ENCODE measurements at regions of chr3 and their contacts with region 1.

Region 1: GRCh38 chr3:136831461-136831860 is 12.5 kb downstream of the SLC35G2 start:
- DNase-seq: no peak
- ATAC-seq: no peak
- H3K4me3 Mint-ChIP-seq: no peak overlapping the region
- H3K27ac Mint-ChIP-seq: no peak overlapping the region
- H3K4me1 Mint-ChIP-seq: peaks cover 5% of the 10 kb centered on the region
- H3K27me3 Mint-ChIP-seq: no peaks in the 10 kb centered on the region
- CTCF ChIP-seq: no peak

Region 2: DNA sequence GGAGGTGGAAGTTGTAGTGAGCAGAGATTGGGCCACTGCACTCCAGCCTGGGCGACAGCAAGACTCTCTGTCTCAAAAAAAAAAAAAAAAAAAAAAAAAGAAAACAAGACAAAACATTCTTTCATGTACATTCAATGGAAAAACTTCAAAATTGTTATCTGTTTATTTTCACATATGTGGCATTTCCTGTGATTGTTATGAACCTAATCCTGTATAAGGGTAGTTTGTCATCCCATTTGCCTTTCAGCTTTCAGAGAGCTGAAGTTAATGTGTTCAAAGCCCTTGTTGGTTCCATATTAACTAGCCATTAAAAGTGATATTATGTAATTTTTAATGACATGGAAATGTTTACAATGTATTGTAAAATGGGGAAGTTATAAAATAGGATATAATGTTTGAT is 13.3 kb after region 1 on chr3:
- CTCF ChIA-PET with region 1: no interaction called
- POLR2A ChIA-PET with region 1: interaction called, 10 read pairs
- intact Hi-C with region 1: no loop called
- DNase-seq: no peak
- ATAC-seq: no peak
- H3K4me3 Mint-ChIP-seq: no peak overlapping the region
- H3K27ac Mint-ChIP-seq: no peak overlapping the region
- H3K4me1 Mint-ChIP-seq: no peaks in the 10 kb centered on the region
- H3K27me3 Mint-ChIP-seq: no peaks in the 10 kb centered on the region
- CTCF ChIP-seq: no peak

Region 3: GRCh38 chr3:137217733-137218132 is 386.3 kb after region 1 on chr3:
- CTCF ChIA-PET with region 1: no interaction called
- POLR2A ChIA-PET with region 1: no interaction called
- intact Hi-C with region 1: no loop called
- DNase-seq: no peak
- ATAC-seq: no peak
- H3K4me3 Mint-ChIP-seq: no peak overlapping the region
- H3K27ac Mint-ChIP-seq: no peak overlapping the region
- H3K4me1 Mint-ChIP-seq: no peaks in the 10 kb centered on the region
- H3K27me3 Mint-ChIP-seq: no peaks in the 10 kb centered on the region
- CTCF ChIP-seq: no peak

Measured in activated B cell treated with CpG ODN at 0.5 μM for 24 hours (primary cell).